ENCODE measurements at regions of chrX and their contacts with region 1.

Region 1: DNA sequence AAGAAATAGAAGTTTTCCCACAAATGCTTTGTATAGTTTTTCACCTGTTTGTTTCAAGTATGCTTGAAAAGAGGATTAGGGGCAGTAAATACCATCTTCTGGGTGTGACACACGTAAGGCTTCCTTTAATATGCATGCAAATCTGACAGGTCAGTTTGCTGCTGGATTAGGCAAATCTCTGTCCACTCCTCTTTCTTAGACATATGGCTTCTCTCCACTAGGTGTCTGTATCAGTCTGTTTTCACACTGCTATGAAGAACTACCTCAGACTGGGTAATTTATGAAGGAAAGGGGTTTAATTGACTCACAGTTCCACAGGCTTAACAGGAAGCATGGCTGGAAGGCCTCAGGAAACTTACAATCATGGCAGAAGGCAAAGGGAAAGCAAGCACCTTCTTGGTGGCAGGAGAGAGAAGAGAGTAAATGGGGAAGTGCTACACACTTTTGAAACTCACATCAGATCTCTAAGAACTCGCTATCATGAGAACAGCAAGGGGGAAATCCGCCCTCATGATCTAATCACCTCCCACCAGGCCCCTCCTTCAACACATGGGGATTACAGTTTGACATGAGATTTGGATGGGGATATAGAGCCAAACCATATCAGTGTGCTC is 66.9 kb downstream of the TAB3 start:
- DNase-seq: no peak
- H3K4me3 Mint-ChIP-seq: no peak overlapping the region
- H3K27ac Mint-ChIP-seq: no peak overlapping the region
- H3K4me1 Mint-ChIP-seq: peaks cover 5% of the 10 kb centered on the region
- H3K27me3 Mint-ChIP-seq: peaks cover 7% of the 10 kb centered on the region

Region 2: DNA sequence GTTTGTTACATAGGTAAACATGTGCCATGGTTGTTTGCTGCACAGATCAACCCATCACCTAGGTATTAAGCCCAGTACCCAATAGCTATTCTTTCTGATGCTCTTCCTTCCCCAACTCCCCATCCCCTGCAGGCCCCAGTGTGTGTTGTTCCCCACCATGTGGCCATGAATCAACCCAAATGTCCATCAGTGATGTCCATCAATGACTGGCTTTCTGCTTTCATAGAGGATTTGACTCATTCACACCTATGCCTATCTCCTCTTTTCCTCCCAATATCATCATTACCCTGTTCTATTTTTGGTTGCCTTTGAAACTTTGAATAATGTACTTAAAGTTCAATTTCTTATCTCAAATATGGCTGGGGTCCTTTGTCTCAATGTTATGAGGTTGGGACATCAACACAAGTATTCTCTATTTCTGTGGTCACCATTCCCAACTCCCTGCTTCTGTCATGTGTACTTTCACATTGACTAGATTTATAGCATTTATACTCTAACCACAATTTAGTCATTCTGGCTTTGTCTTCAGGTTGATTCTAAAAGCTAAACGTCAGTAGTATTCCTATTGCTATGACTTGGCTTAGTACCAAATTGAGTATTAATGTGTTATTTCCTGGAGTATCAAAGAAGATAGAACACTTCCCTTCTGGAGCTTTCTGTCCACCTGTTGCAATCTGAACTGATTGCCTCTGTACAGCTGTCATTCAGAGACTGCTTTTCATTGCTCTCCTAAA is 40.3 kb before region 1 on chrX:
- intact Hi-C with region 1: loop called (anchors 5 kb)
- DNase-seq: no peak
- H3K4me3 Mint-ChIP-seq: no peak overlapping the region
- H3K27ac Mint-ChIP-seq: no peak overlapping the region
- H3K4me1 Mint-ChIP-seq: peaks cover 10% of the 10 kb centered on the region
- H3K27me3 Mint-ChIP-seq: no peaks in the 10 kb centered on the region

Region 3: GRCh38 chrX:30889147-30890140 is 67.3 kb after region 1 on chrX and contains the start of gene TAB3:
- intact Hi-C with region 1: no loop called
- DNase-seq: peak; percentile 91
- H3K4me3 Mint-ChIP-seq: peak within 1 kb of the TSS; percentile 90
- H3K27ac Mint-ChIP-seq: peak within 1 kb of the TSS; percentile 96
- H3K4me1 Mint-ChIP-seq: peaks cover 32% of the 10 kb centered on the region
- H3K27me3 Mint-ChIP-seq: no peaks in the 10 kb centered on the region
- total RNA-seq, gene TAB3: 23.7 and 24.4 TPM in 2 replicates

Measured in activated T-helper 1 cell treated with anti-CD3 and anti-CD28 coated beads, Interleukin-12 subunit alpha, Interleukin-12 subunit beta, Interleukin-2, Interleukin-4 antibody, amounts not matched to agents 30 ng/mL and 10 ng/mL and 1 ng/mL, durations not matched to agents 14 hours and 24 hours and 36 hours (primary cell).